Activated T-helper 1 cell treated with anti-CD3 and anti-CD28 coated beads, Interleukin-12 subunit alpha, Interleukin-12 subunit beta, Interleukin-2, Interleukin-4 antibody, amounts not matched to agents 30 ng/mL and 10 ng/mL and 1 ng/mL, durations not matched to agents 14 hours and 24 hours and 36 hours (primary cell): ENCODE measurements at regions of chr3 and their contacts with region 1.

Region 1: GRCh38 chr3:81302045-81302444 is 459.4 kb downstream of the GBE1 start:
- DNase-seq: no peak
- H3K4me3 Mint-ChIP-seq: no peak overlapping the region
- H3K27ac Mint-ChIP-seq: no peak overlapping the region
- H3K4me1 Mint-ChIP-seq: no peaks in the 10 kb centered on the region
- H3K27me3 Mint-ChIP-seq: no peaks in the 10 kb centered on the region

Region 2: GRCh38 chr3:81242871-81243270 is 59.2 kb before region 1 on chr3:
- intact Hi-C with region 1: no loop called
- DNase-seq: no peak
- H3K4me3 Mint-ChIP-seq: no peak overlapping the region
- H3K27ac Mint-ChIP-seq: no peak overlapping the region
- H3K4me1 Mint-ChIP-seq: no peaks in the 10 kb centered on the region
- H3K27me3 Mint-ChIP-seq: peaks cover 1% of the 10 kb centered on the region

Region 3: GRCh38 chr3:82133070-82133606 is 831.1 kb after region 1 on chr3:
- intact Hi-C with region 1: loop called (anchors 5 kb)
- DNase-seq: no peak
- H3K4me3 Mint-ChIP-seq: no peak overlapping the region
- H3K27ac Mint-ChIP-seq: no peak overlapping the region
- H3K4me1 Mint-ChIP-seq: no peaks in the 10 kb centered on the region
- H3K27me3 Mint-ChIP-seq: peaks cover 3% of the 10 kb centered on the region